T-cell (primary cell): ENCODE measurements at regions of chr12 and their contacts with region 1.

Region 1: GRCh38 chr12:93387780-93388179 is 10.1 kb downstream of the NUDT4 start:
- DNase-seq: no peak
- ATAC-seq: peak in 1 of 4 experiments; percentile 20
- H3K4me3 ChIP-seq: no peak overlapping the region
- H3K4me3 Mint-ChIP-seq: no peak overlapping the region
- H3K27ac ChIP-seq: no peak overlapping the region
- H3K27ac Mint-ChIP-seq: peak overlapping the region in 1 of 2 donors; percentile 37
- H3K4me1 ChIP-seq: peaks cover 12 to 24% of the 10 kb centered on the region in 2 experiments
- H3K4me1 Mint-ChIP-seq: peaks cover 55 to 61% (median 55%) of the 10 kb centered on the region in 3 donors
- H3K27me3 ChIP-seq: no peaks in the 10 kb centered on the region
- H3K27me3 Mint-ChIP-seq: no peaks in the 10 kb centered on the region

Region 2: GRCh38 chr12:93256256-93256969 is 131.4 kb before region 1 on chr12:
- CTCF ChIA-PET with region 1: no interaction called
- POLR2A ChIA-PET with region 1: no interaction called
- DNase-seq: no peak
- ATAC-seq: no peak
- H3K4me3 ChIP-seq: no peak overlapping the region
- H3K4me3 Mint-ChIP-seq: no peak overlapping the region
- H3K27ac ChIP-seq: no peak overlapping the region
- H3K27ac Mint-ChIP-seq: no peak overlapping the region
- H3K4me1 ChIP-seq: no peaks in the 10 kb centered on the region
- H3K4me1 Mint-ChIP-seq: no peaks in the 10 kb centered on the region
- H3K27me3 ChIP-seq: no peaks in the 10 kb centered on the region
- H3K27me3 Mint-ChIP-seq: no peaks in the 10 kb centered on the region

Region 3: GRCh38 chr12:93273834-93274564 is 113.8 kb before region 1 on chr12:
- CTCF ChIA-PET with region 1: no interaction called
- POLR2A ChIA-PET with region 1: no interaction called
- DNase-seq: peak in 1 of 35 experiments; percentile 3
- ATAC-seq: peak in 1 of 4 experiments; percentile 52
- H3K4me3 ChIP-seq: no peak overlapping the region
- H3K4me3 Mint-ChIP-seq: peak overlapping the region in 1 of 3 donors; percentile 67
- H3K27ac ChIP-seq: no peak overlapping the region
- H3K27ac Mint-ChIP-seq: no peak overlapping the region
- H3K4me1 ChIP-seq: peaks cover 0 to 9% of the 10 kb centered on the region in 2 experiments
- H3K4me1 Mint-ChIP-seq: peaks cover 8 to 13% (median 11%) of the 10 kb centered on the region in 3 donors
- H3K27me3 ChIP-seq: no peaks in the 10 kb centered on the region
- H3K27me3 Mint-ChIP-seq: no peaks in the 10 kb centered on the region

Region 4: GRCh38 chr12:93773122-93773871 is 385.5 kb after region 1 on chr12:
- CTCF ChIA-PET with region 1: no interaction called
- POLR2A ChIA-PET with region 1: interaction called in 1 of 2 experiments, 13 read pairs
- DNase-seq: peak in 23 of 35 experiments; percentile 5 to 54 (median 19)
- ATAC-seq: peak; percentile 9 to 84 (median 40)
- H3K4me3 ChIP-seq: no peak overlapping the region
- H3K4me3 Mint-ChIP-seq: no peak overlapping the region
- H3K27ac ChIP-seq: peak overlapping the region; percentile 15
- H3K27ac Mint-ChIP-seq: peak overlapping the region; percentile 47 to 64
- H3K4me1 ChIP-seq: peaks cover under 1 to 9% of the 10 kb centered on the region in 2 experiments
- H3K4me1 Mint-ChIP-seq: peaks cover 23 to 41% (median 32%) of the 10 kb centered on the region in 3 donors
- H3K27me3 ChIP-seq: no peaks in the 10 kb centered on the region
- H3K27me3 Mint-ChIP-seq: no peaks in the 10 kb centered on the region

Region 5: GRCh38 chr12:93908846-93909567 is 521.2 kb after region 1 on chr12:
- CTCF ChIA-PET with region 1: no interaction called
- POLR2A ChIA-PET with region 1: no interaction called
- DNase-seq: no peak
- ATAC-seq: no peak
- H3K4me3 ChIP-seq: no peak overlapping the region
- H3K4me3 Mint-ChIP-seq: no peak overlapping the region
- H3K27ac ChIP-seq: no peak overlapping the region
- H3K27ac Mint-ChIP-seq: no peak overlapping the region
- H3K4me1 ChIP-seq: no peaks in the 10 kb centered on the region
- H3K4me1 Mint-ChIP-seq: no peaks in the 10 kb centered on the region
- H3K27me3 ChIP-seq: peaks cover 0 to 3% of the 10 kb centered on the region in 2 experiments
- H3K27me3 Mint-ChIP-seq: no peaks in the 10 kb centered on the region